MCF 10A (cell line): ENCODE measurements at regions of chr16 and their contacts with region 1.

Region 1: GRCh38 chr16:740764-741505 is at the start of gene CIAO3:
- DNase-seq: peak; percentile 88
- H3K4me3 Mint-ChIP-seq: peak within 1 kb of the TSS; percentile 74
- H3K27ac Mint-ChIP-seq: peak within 1 kb of the TSS; percentile 84
- H3K4me1 Mint-ChIP-seq: peaks cover 6% of the 10 kb centered on the region
- H3K27me3 Mint-ChIP-seq: no peaks in the 10 kb centered on the region
- CTCF ChIP-seq: peak; percentile 96
- total RNA-seq, gene CIAO3: 28.5 and 31.1 TPM in 2 replicates

Region 2: GRCh38 chr16:714558-715476 is 26.1 kb before region 1 on chr16 and contains the start of gene METRN:
- CTCF ChIA-PET with region 1: interaction called, 9 read pairs
- POLR2A ChIA-PET with region 1: interaction called, 26 read pairs
- intact Hi-C with region 1: no loop called
- DNase-seq: peak; percentile 83
- H3K4me3 Mint-ChIP-seq: peak within 1 kb of the TSS; percentile 76
- H3K27ac Mint-ChIP-seq: peak within 1 kb of the TSS; percentile 16
- H3K4me1 Mint-ChIP-seq: peaks cover 21% of the 10 kb centered on the region
- H3K27me3 Mint-ChIP-seq: no peaks in the 10 kb centered on the region
- CTCF ChIP-seq: no peak
- total RNA-seq, gene METRN: 56.3 and 69.5 TPM in 2 replicates

Region 3: GRCh38 chr16:728131-728889 is 12.6 kb before region 1 on chr16:
- CTCF ChIA-PET with region 1: interaction called, 6 read pairs
- POLR2A ChIA-PET with region 1: interaction called, 31 read pairs
- intact Hi-C with region 1: no loop called
- DNase-seq: peak; percentile 82
- H3K4me3 Mint-ChIP-seq: peak overlapping the region; percentile 65
- H3K27ac Mint-ChIP-seq: no peak overlapping the region
- H3K4me1 Mint-ChIP-seq: no peaks in the 10 kb centered on the region
- H3K27me3 Mint-ChIP-seq: no peaks in the 10 kb centered on the region
- CTCF ChIP-seq: no peak

Region 4: DNA sequence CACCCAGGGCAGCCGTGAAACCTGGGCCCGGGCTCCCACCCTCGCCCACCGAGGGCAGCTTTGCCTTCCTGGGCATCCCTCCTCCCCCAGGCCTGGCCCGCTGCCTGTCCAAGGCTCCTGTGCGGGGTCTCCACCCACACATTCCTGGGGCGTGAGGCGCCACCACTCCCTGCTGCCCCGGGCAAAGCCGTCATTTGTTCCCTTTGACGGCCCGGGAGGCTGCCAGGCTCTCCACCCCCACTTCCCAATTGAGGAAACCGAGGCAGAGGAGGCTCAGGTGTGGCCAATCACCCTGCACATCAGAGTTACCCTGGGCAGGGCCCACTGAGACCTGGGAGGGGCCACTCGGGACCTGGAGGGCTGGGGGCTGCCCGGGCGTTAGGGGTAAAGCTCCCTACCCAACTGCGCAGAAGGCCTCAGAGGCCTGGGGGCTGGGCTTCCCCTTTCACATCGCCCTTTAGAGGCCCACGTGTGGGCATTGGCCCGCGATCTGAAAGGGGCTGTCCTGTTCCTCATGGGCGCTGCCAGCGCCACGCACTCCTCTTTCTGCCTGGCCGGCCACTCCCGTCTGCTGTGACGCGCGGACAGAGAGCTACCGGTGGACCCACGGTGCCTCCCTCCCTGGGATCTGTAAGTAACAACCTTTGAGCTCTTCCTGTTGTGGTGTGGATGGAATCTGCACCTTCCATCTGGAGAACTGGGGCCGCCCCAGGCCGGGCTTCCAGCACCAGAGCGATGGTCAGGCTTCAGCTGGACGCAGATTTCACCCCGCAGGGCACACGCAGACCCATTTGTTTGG is 19.8 kb after region 1 on chr16 and contains the start of gene MSLN:
- CTCF ChIA-PET with region 1: interaction called, 13 read pairs
- POLR2A ChIA-PET with region 1: interaction called, 19 read pairs
- intact Hi-C with region 1: no loop called
- DNase-seq: peak; percentile 76
- H3K4me3 Mint-ChIP-seq: peak within 1 kb of the TSS; percentile 60
- H3K27ac Mint-ChIP-seq: peak within 1 kb of the TSS; percentile 61
- H3K4me1 Mint-ChIP-seq: peaks cover 10% of the 10 kb centered on the region
- H3K27me3 Mint-ChIP-seq: no peaks in the 10 kb centered on the region
- CTCF ChIP-seq: no peak
- total RNA-seq, gene MSLN: 18.1 and 25.2 TPM in 2 replicates

Region 5: GRCh38 chr16:852451-853185 is 111.7 kb after region 1 on chr16:
- CTCF ChIA-PET with region 1: no interaction called
- POLR2A ChIA-PET with region 1: no interaction called
- intact Hi-C with region 1: no loop called
- DNase-seq: no peak
- H3K4me3 Mint-ChIP-seq: no peak overlapping the region
- H3K27ac Mint-ChIP-seq: no peak overlapping the region
- H3K4me1 Mint-ChIP-seq: no peaks in the 10 kb centered on the region
- H3K27me3 Mint-ChIP-seq: no peaks in the 10 kb centered on the region
- CTCF ChIP-seq: no peak